Endothelial cell of umbilical vein (primary cell): ENCODE measurements at regions of chr6 and their contacts with region 1.

Region 1: DNA sequence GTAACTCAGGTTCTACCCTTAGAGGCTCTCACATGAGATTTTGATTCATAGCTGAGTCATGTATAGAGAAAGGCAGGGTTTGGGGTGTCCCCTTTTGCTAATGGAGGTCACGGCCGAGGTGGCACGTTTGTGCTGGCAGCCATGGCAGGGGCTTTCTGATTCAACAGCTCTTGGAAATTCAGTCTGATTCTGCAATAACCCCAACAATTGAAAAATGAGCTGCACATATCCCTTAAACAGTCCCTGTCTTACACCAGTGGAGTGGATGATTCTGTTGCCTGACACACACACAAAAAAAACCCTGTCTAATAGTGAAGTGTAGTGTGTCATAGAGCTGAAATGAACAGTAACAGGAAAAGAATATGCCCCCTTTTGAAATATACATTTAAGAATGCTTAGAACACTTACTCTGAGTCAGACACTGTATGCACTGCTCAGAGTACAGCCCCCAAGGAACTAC is 40.4 kb upstream of the ARG1 start:
- DNase-seq: no peak
- H3K4me3 ChIP-seq: no peak overlapping the region
- H3K27ac ChIP-seq: no peak overlapping the region
- H3K4me1 ChIP-seq: no peaks in the 10 kb centered on the region
- H3K27me3 ChIP-seq: peaks cover 0 to 6% of the 10 kb centered on the region in 2 experiments
- CTCF ChIP-seq: no peak
- POLR2A ChIP-seq: no peak

Region 2: DNA sequence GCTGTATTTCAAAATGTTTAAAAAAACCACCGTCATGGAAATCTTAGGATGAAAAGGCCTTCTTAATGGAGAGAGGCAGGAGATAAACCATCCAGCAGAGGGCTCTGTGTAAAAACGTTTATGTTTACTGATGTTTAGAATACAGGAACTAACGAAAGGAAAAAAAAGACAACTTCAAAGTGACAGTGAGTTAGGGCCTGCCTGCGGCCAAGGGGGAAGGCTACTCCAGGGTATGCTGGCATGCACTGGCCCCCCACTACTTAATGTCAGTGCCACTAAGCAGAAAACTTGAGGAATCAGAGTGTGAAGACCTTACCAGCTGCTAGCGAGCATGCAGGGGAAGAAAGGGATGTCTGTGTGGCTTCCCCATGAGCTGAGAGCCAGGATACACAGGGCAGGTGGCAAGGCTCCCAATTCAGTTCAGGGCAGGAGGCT is 349.6 kb before region 1 on chr6:
- CTCF ChIA-PET with region 1: interaction called, 58 read pairs
- POLR2A ChIA-PET with region 1: no interaction called
- dilution Hi-C with region 1: no loop called
- intact Hi-C with region 1: loop called (anchors 5 kb)
- DNase-seq: peak; percentile 56
- H3K4me3 ChIP-seq: no peak overlapping the region
- H3K27ac ChIP-seq: no peak overlapping the region
- H3K4me1 ChIP-seq: no peaks in the 10 kb centered on the region
- H3K27me3 ChIP-seq: no peaks in the 10 kb centered on the region
- CTCF ChIP-seq: peak; percentile 23 to 46
- POLR2A ChIP-seq: no peak

Region 3: DNA sequence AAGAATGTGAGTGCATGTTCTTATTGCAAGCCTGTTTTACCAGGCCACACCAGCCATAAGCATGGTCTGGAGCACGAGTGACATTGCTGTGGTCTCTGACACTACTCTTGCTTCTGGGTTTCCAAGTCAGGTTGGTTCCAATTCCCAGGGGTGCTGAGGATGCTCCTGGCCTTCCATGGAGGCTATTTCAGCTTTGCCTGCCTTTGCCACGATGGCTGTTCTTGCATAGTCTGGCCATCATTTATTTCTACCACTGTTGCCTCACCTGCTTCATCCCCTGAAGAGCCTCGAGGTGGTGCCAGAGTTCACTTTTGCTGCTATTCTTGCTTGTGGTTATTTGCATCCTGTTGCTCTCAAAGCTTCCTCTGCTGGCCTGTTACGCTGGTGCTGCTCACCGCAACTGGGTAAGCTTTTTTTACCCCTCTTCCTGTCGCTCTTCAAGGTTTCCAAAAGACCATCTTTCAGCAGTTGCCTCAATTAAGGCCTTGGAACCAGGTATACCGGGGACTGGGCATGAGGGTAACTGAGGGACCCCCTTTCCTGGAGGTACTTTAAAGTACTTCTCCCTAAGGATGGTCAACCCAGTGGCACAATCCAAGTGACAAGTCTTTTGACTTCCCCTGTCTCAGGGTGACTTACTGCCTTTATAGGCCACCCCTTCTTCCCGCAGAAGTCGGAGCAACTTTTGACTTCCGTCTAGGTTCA is 332.9 kb before region 1 on chr6:
- CTCF ChIA-PET with region 1: interaction called, 75 read pairs
- POLR2A ChIA-PET with region 1: no interaction called
- dilution Hi-C with region 1: no loop called
- intact Hi-C with region 1: loop called (anchors 1 kb)
- DNase-seq: peak; percentile 43
- H3K4me3 ChIP-seq: no peak overlapping the region
- H3K27ac ChIP-seq: no peak overlapping the region
- H3K4me1 ChIP-seq: no peaks in the 10 kb centered on the region
- H3K27me3 ChIP-seq: no peaks in the 10 kb centered on the region
- CTCF ChIP-seq: peak; percentile 52 to 57
- POLR2A ChIP-seq: no peak

Region 4: DNA sequence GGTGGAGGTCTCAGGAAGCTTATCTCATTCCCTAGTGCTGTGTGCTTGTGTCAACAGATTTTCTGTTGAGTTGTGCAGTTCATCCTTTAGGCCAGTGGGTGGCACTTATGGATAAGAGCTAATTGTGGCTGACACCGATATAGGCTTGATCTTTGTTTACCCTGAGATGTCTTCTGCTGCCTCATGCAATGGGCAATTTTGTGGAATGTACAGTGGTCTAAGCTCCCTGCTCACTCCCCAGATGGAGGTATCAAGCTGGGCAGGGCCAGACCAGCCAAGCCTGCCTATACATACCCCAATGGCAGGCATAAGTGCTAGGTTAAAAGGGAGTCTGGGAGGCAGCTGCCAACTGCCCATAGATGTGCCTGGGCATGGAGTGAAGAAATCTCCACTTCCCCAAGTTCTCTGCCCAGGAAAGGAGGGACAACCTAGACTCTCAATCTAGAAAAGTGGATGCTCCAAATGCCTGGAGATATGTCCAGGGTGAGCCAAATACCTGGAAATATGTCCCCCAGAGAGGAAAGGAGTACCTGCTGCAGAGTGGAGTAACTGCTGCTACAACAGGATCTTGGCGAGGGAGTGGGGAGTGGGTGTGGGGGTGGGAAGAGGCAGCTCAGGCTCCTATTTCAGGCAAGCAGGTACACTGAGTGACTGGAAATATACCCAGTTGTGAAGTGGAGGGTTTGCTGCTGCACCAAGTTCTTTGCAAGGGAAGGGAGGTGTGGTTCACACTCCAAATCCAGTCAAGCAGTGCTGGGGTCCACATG is 12.8 kb before region 1 on chr6:
- CTCF ChIA-PET with region 1: interaction called, 54 read pairs
- POLR2A ChIA-PET with region 1: no interaction called
- dilution Hi-C with region 1: no loop called
- intact Hi-C with region 1: loop called (anchors 2 kb)
- DNase-seq: peak; percentile 54
- H3K4me3 ChIP-seq: no peak overlapping the region
- H3K27ac ChIP-seq: no peak overlapping the region
- H3K4me1 ChIP-seq: no peaks in the 10 kb centered on the region
- H3K27me3 ChIP-seq: no peaks in the 10 kb centered on the region
- CTCF ChIP-seq: peak; percentile 49 to 65
- POLR2A ChIP-seq: no peak